ENCODE measurements at regions of chr4 and their contacts with region 1.

Region 1: GRCh38 chr4:172155838-172156345 is 342.7 kb downstream of the GALNTL6 start:
- DNase-seq: no peak
- ATAC-seq: no peak
- H3K4me3 ChIP-seq: no peak overlapping the region
- H3K27ac ChIP-seq: no peak overlapping the region
- H3K4me1 ChIP-seq: no peaks in the 10 kb centered on the region
- H3K27me3 ChIP-seq: no peaks in the 10 kb centered on the region
- CTCF ChIP-seq: no peak

Region 2: DNA sequence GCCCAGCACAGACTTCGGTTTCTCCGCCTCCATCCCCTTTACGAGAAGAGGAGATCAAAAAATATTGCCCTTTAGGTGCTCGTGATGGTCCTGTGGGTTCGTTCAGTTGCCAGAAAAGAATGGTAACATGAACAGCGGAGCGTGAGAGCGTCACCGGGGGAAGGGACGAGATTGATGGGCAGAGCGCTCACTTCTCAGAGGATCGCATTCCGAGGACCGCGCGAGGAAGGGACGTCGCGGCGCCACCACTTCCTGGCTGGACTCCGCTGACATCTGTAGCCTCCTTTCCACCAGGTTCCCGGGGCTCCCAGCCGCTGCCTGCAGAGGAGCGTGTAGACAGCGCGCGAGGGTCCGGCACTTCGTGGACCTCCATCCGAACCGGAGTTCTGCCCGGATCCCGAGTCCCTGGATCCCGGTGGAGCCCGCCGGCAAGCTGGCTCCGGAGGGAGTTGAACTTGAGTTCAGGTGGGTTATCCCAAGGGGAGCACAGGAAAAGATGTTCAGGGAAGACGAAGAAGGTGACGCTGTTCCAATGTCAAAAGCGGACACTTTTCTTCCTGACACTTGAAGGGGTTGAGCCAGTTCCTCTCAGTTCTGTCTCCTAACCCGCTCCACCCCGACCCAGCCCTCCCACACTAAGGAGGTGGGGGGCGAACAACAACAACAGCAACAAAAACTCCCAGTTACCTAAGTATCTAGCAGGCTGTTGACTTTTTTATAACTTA is 342.2 kb before region 1 on chr4:
- intact Hi-C with region 1: no loop called
- DNase-seq: peak in 1 of 2 donors; percentile 9
- ATAC-seq: peak in 1 of 8 donors; percentile 13
- H3K4me3 ChIP-seq: peak overlapping the region in 8 of 10 donors; percentile 28 to 44 (median 42)
- H3K27ac ChIP-seq: no peak overlapping the region
- H3K4me1 ChIP-seq: peaks cover 0 to 15% (median 4%) of the 10 kb centered on the region in 9 donors
- H3K27me3 ChIP-seq: peaks cover 0 to 46% (median 38%) of the 10 kb centered on the region in 7 donors
- CTCF ChIP-seq: no peak

Region 3: GRCh38 chr4:172109466-172109865 is 46.4 kb before region 1 on chr4:
- intact Hi-C with region 1: loop called in 1 of 10 experiments (anchors 1 kb)
- DNase-seq: no peak
- ATAC-seq: no peak
- H3K4me3 ChIP-seq: no peak overlapping the region
- H3K27ac ChIP-seq: no peak overlapping the region
- H3K4me1 ChIP-seq: no peaks in the 10 kb centered on the region
- H3K27me3 ChIP-seq: no peaks in the 10 kb centered on the region
- CTCF ChIP-seq: no peak

Region 4: GRCh38 chr4:172188249-172188938 is 32.5 kb after region 1 on chr4:
- intact Hi-C with region 1: loop called in 1 of 10 experiments (anchors 1 kb)
- DNase-seq: no peak
- ATAC-seq: no peak
- H3K4me3 ChIP-seq: no peak overlapping the region
- H3K27ac ChIP-seq: no peak overlapping the region
- H3K4me1 ChIP-seq: no peaks in the 10 kb centered on the region
- H3K27me3 ChIP-seq: no peaks in the 10 kb centered on the region
- CTCF ChIP-seq: no peak

Region 5: DNA sequence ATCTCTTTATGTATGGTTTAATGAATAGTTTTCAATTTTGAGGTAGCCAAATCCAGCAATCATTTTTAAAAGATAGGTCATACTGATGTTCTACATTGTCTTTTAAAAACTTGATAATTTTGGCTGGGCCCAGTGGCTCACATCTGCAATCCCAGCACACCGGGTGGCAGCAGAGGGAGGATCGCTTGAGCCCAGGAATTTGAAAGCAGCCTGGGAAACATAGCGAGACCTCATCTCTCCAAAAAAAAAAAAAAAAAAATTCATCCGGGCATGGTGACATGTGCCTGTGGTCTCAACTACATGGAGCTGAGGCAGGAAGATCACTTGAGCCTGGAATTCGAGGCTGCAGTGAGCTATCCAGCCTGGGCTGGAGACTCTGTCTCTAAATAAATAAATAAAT is 77.1 kb after region 1 on chr4:
- intact Hi-C with region 1: no loop called
- DNase-seq: no peak
- ATAC-seq: no peak
- H3K4me3 ChIP-seq: no peak overlapping the region
- H3K27ac ChIP-seq: no peak overlapping the region
- H3K4me1 ChIP-seq: no peaks in the 10 kb centered on the region
- H3K27me3 ChIP-seq: no peaks in the 10 kb centered on the region
- CTCF ChIP-seq: no peak